Activated CD4-positive, alpha-beta T cell treated with anti-CD3 and anti-CD28 coated beads for 36 hours (primary cell): ENCODE measurements at regions of chr2 and their contacts with region 1.

Region 1: GRCh38 chr2:227655454-227655853 is 11.2 kb upstream of the SCYGR5 start:
- DNase-seq: no peak
- ATAC-seq: peak; percentile 84
- H3K4me3 Mint-ChIP-seq: no peak overlapping the region
- H3K27ac Mint-ChIP-seq: no peak overlapping the region
- H3K4me1 Mint-ChIP-seq: peaks cover 5% of the 10 kb centered on the region
- H3K27me3 Mint-ChIP-seq: peaks cover 12% of the 10 kb centered on the region

Region 2: DNA sequence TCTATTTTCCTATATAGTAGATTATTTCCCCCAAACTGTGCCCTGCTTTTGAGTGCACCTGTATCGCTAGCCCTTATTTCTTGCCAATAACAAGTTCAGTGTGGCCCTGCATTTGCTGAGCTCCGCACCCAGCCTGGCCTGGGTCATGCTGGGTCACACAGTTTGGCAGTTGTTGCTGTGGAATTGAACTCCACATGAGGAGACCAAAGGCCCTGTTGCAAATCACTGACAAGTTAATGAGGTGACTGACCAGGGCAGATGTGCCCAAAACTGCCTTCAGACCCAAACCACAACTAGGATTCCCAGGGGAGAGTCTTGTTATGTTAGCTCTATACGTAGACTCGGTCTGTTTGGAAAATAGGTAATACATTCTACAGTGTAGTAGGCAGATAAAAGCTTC is 522.5 kb before region 1 on chr2:
- CTCF ChIA-PET with region 1: no interaction called
- POLR2A ChIA-PET with region 1: no interaction called
- intact Hi-C with region 1: loop called in 1 of 2 experiments (anchors 1 kb)
- DNase-seq: no peak
- ATAC-seq: no peak
- H3K4me3 Mint-ChIP-seq: no peak overlapping the region
- H3K27ac Mint-ChIP-seq: no peak overlapping the region
- H3K4me1 Mint-ChIP-seq: no peaks in the 10 kb centered on the region
- H3K27me3 Mint-ChIP-seq: peaks cover 7% of the 10 kb centered on the region

Region 3: DNA sequence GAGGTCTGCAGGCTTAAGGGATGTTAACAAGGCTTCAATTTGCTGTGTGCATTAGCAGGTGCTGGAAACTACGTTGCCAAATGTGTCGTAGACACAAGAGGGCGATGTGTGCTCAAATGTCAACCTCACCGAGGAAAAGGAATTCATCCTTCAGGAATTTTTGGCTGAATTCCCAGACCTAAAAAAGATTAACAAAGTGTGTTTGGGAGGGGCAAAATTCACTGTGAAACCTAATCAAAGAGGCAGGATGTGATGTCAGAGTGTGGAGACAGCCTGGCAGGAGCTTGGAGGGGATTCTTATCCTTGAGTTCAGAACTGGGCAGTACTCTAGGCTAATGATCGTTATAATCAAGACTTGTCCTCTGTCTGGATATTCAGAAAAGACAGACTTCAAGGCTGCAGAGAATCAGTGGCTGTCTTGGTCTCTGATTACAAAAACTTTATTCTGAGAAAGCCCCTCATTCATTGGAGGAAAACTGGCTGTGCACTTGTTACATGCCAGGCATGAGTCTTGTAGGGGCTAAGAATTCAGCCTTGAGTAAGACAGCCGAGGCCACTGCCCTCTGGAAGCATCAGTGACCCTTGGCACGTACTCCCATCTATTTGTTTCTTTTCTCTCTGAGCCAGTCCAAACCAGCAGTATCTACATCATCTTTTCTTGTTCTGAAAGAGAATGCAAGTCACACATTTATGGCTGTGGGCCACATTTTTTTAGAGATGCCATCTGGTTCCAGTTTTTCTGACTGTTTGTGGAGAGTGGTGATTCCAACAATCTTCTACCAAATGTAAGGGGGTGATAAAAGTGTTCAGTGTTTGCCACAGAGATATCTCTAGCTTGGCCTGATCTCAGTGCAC is 249.1 kb before region 1 on chr2:
- CTCF ChIA-PET with region 1: interaction called, 6 read pairs
- POLR2A ChIA-PET with region 1: no interaction called
- intact Hi-C with region 1: loop called (anchors 5 to 10 kb)
- DNase-seq: peak; percentile 43
- ATAC-seq: no peak
- H3K4me3 Mint-ChIP-seq: no peak overlapping the region
- H3K27ac Mint-ChIP-seq: peak overlapping the region; percentile 14
- H3K4me1 Mint-ChIP-seq: peaks cover 52% of the 10 kb centered on the region
- H3K27me3 Mint-ChIP-seq: no peaks in the 10 kb centered on the region

Region 4: GRCh38 chr2:227479865-227480475 is 175.5 kb before region 1 on chr2:
- CTCF ChIA-PET with region 1: interaction called, 4 read pairs
- POLR2A ChIA-PET with region 1: no interaction called
- intact Hi-C with region 1: loop called in 1 of 2 experiments (anchors 5 kb)
- DNase-seq: no peak
- ATAC-seq: peak; percentile 48
- H3K4me3 Mint-ChIP-seq: peak overlapping the region; percentile 12
- H3K27ac Mint-ChIP-seq: peak overlapping the region; percentile 67
- H3K4me1 Mint-ChIP-seq: peaks cover 74% of the 10 kb centered on the region
- H3K27me3 Mint-ChIP-seq: no peaks in the 10 kb centered on the region

Region 5: GRCh38 chr2:227627769-227628168 is 27.7 kb before region 1 on chr2:
- CTCF ChIA-PET with region 1: interaction called, 6 read pairs
- POLR2A ChIA-PET with region 1: no interaction called
- intact Hi-C with region 1: loop called in 1 of 2 experiments (anchors 2 kb)
- DNase-seq: peak; percentile 36
- ATAC-seq: peak; percentile 96
- H3K4me3 Mint-ChIP-seq: no peak overlapping the region
- H3K27ac Mint-ChIP-seq: no peak overlapping the region
- H3K4me1 Mint-ChIP-seq: peaks cover 2% of the 10 kb centered on the region
- H3K27me3 Mint-ChIP-seq: peaks cover 18% of the 10 kb centered on the region

Region 6: GRCh38 chr2:227720680-227721079 is 65.2 kb after region 1 on chr2:
- CTCF ChIA-PET with region 1: no interaction called
- POLR2A ChIA-PET with region 1: no interaction called
- intact Hi-C with region 1: no loop called
- DNase-seq: no peak
- ATAC-seq: no peak
- H3K4me3 Mint-ChIP-seq: no peak overlapping the region
- H3K27ac Mint-ChIP-seq: no peak overlapping the region
- H3K4me1 Mint-ChIP-seq: peaks cover 4% of the 10 kb centered on the region
- H3K27me3 Mint-ChIP-seq: peaks cover 8% of the 10 kb centered on the region

Region 7: DNA sequence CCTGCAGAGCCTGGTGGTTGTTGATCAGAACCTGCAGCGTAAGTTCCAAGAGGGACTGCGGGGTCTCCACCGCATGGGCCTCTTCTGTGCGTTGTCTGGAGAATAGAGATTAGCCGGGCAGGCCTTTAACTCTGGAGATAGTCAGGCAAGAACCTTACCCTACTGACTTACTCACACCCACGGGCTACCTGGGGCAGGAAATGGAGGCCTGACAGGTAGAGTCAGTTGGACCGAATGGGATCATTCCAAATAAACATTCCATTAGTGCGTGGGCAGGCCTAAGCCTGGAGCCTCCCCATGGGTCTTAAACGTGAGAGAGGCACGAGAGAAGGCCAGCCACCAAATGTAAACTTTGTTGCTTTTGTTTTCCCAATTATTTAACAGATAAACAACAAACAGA is 88.8 kb after region 1 on chr2:
- CTCF ChIA-PET with region 1: no interaction called
- POLR2A ChIA-PET with region 1: no interaction called
- intact Hi-C with region 1: no loop called
- DNase-seq: no peak
- ATAC-seq: no peak
- H3K4me3 Mint-ChIP-seq: no peak overlapping the region
- H3K27ac Mint-ChIP-seq: no peak overlapping the region
- H3K4me1 Mint-ChIP-seq: no peaks in the 10 kb centered on the region
- H3K27me3 Mint-ChIP-seq: peaks cover 3% of the 10 kb centered on the region

Region 8: GRCh38 chr2:227862227-227862740 is 206.8 kb after region 1 on chr2:
- CTCF ChIA-PET with region 1: interaction called, 16 read pairs
- POLR2A ChIA-PET with region 1: no interaction called
- intact Hi-C with region 1: loop called (anchors 1 to 5 kb)
- DNase-seq: peak; percentile 49
- ATAC-seq: no peak
- H3K4me3 Mint-ChIP-seq: no peak overlapping the region
- H3K27ac Mint-ChIP-seq: no peak overlapping the region
- H3K4me1 Mint-ChIP-seq: peaks cover 3% of the 10 kb centered on the region
- H3K27me3 Mint-ChIP-seq: peaks cover 8% of the 10 kb centered on the region

Region 9: GRCh38 chr2:227884511-227884947 is 229.1 kb after region 1 on chr2:
- CTCF ChIA-PET with region 1: interaction called, 3 read pairs
- POLR2A ChIA-PET with region 1: no interaction called
- intact Hi-C with region 1: loop called (anchors 1 to 5 kb)
- DNase-seq: peak; percentile 80
- ATAC-seq: peak; percentile 81
- H3K4me3 Mint-ChIP-seq: no peak overlapping the region
- H3K27ac Mint-ChIP-seq: no peak overlapping the region
- H3K4me1 Mint-ChIP-seq: no peaks in the 10 kb centered on the region
- H3K27me3 Mint-ChIP-seq: peaks cover 8% of the 10 kb centered on the region